CD4-positive, alpha-beta T cell (primary cell): ENCODE measurements at regions of chr16 and their contacts with region 1.

Region 1: GRCh38 chr16:70653809-70654771 is 7.7 kb downstream of the IL34 start:
- DNase-seq: peak; percentile 60 to 86 (median 78)
- ATAC-seq: peak; percentile 92
- H3K4me3 ChIP-seq: no peak overlapping the region
- H3K4me3 Mint-ChIP-seq: no peak overlapping the region
- H3K27ac ChIP-seq: no peak overlapping the region
- H3K27ac Mint-ChIP-seq: no peak overlapping the region
- H3K4me1 ChIP-seq: peaks cover 4% of the 10 kb centered on the region
- H3K4me1 Mint-ChIP-seq: peaks cover 4% of the 10 kb centered on the region
- H3K27me3 ChIP-seq: no peaks in the 10 kb centered on the region
- H3K27me3 Mint-ChIP-seq: no peaks in the 10 kb centered on the region
- CTCF ChIP-seq: peak; percentile 88

Region 2: DNA sequence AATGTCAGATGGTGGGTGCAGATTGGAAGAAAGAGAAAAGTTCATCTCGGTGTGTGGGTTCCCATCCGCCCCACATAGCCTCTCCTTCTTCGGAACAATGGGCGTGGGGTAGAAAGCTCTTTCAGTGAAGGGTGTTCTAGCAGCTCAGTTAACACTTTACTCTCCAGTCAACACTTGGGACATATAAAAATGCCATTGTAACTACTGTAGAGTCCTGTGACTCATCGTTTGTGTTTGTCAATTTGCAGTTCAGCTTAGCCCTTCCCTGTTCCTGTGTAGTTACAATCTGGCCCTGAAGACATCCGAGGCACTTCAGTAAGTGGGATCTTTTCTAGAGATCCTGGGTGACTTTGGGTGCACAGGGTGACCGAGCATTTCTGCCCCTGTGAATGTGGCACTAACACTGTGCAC is 492.0 kb before region 1 on chr16:
- CTCF ChIA-PET with region 1: no interaction called
- POLR2A ChIA-PET with region 1: no interaction called
- intact Hi-C with region 1: loop called (anchors 10 kb)
- DNase-seq: no peak
- ATAC-seq: no peak
- H3K4me3 ChIP-seq: no peak overlapping the region
- H3K4me3 Mint-ChIP-seq: no peak overlapping the region
- H3K27ac ChIP-seq: no peak overlapping the region
- H3K27ac Mint-ChIP-seq: peak overlapping the region; percentile 5
- H3K4me1 ChIP-seq: no peaks in the 10 kb centered on the region
- H3K4me1 Mint-ChIP-seq: peaks cover 5% of the 10 kb centered on the region
- H3K27me3 ChIP-seq: no peaks in the 10 kb centered on the region
- H3K27me3 Mint-ChIP-seq: no peaks in the 10 kb centered on the region
- CTCF ChIP-seq: no peak

Region 3: GRCh38 chr16:70364399-70364798 is 289.7 kb before region 1 on chr16:
- CTCF ChIA-PET with region 1: no interaction called
- POLR2A ChIA-PET with region 1: no interaction called
- intact Hi-C with region 1: loop called in 1 of 2 experiments (anchors 5 kb)
- DNase-seq: no peak
- ATAC-seq: no peak
- H3K4me3 ChIP-seq: no peak overlapping the region
- H3K4me3 Mint-ChIP-seq: no peak overlapping the region
- H3K27ac ChIP-seq: no peak overlapping the region
- H3K27ac Mint-ChIP-seq: no peak overlapping the region
- H3K4me1 ChIP-seq: no peaks in the 10 kb centered on the region
- H3K4me1 Mint-ChIP-seq: no peaks in the 10 kb centered on the region
- H3K27me3 ChIP-seq: no peaks in the 10 kb centered on the region
- H3K27me3 Mint-ChIP-seq: no peaks in the 10 kb centered on the region
- CTCF ChIP-seq: no peak

Region 4: DNA sequence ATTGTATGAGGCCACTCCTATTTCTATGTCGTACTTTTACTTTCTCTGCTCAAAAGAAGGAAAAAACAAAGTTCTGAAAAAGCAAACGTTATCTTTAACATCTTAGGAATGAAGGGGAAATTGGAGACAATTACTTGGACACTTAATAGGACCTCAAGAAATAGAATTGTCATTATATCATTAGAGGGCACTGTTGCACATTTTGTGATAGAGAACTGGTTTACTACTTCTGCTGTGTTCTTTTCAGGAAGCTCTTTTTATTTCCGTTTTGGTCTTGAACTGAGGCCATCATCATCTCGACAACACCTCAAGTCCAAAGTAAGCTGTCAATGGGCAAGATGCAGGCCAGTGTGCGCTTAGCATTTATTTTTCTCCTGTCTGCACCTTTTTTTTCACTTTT is 145.3 kb before region 1 on chr16:
- CTCF ChIA-PET with region 1: no interaction called
- POLR2A ChIA-PET with region 1: no interaction called
- intact Hi-C with region 1: loop called in 1 of 2 experiments (anchors 2 kb)
- DNase-seq: peak in 3 of 14 experiments; percentile 41 to 53 (median 46)
- ATAC-seq: peak; percentile 49
- H3K4me3 ChIP-seq: no peak overlapping the region
- H3K4me3 Mint-ChIP-seq: no peak overlapping the region
- H3K27ac ChIP-seq: no peak overlapping the region
- H3K27ac Mint-ChIP-seq: peak overlapping the region; percentile 31
- H3K4me1 ChIP-seq: peaks cover 6% of the 10 kb centered on the region
- H3K4me1 Mint-ChIP-seq: peaks cover 9% of the 10 kb centered on the region
- H3K27me3 ChIP-seq: no peaks in the 10 kb centered on the region
- H3K27me3 Mint-ChIP-seq: no peaks in the 10 kb centered on the region
- CTCF ChIP-seq: peak; percentile 41

Region 5: GRCh38 chr16:70725912-70726828 is 72.1 kb after region 1 on chr16:
- CTCF ChIA-PET with region 1: no interaction called
- POLR2A ChIA-PET with region 1: no interaction called
- intact Hi-C with region 1: no loop called
- DNase-seq: no peak
- ATAC-seq: no peak
- H3K4me3 ChIP-seq: no peak overlapping the region
- H3K4me3 Mint-ChIP-seq: no peak overlapping the region
- H3K27ac ChIP-seq: no peak overlapping the region
- H3K27ac Mint-ChIP-seq: no peak overlapping the region
- H3K4me1 ChIP-seq: no peaks in the 10 kb centered on the region
- H3K4me1 Mint-ChIP-seq: no peaks in the 10 kb centered on the region
- H3K27me3 ChIP-seq: no peaks in the 10 kb centered on the region
- H3K27me3 Mint-ChIP-seq: no peaks in the 10 kb centered on the region
- CTCF ChIP-seq: no peak